Adrenal gland (tissue), 19 donors: ENCODE measurements at regions of chr2 and their contacts with region 1.

Region 1: DNA sequence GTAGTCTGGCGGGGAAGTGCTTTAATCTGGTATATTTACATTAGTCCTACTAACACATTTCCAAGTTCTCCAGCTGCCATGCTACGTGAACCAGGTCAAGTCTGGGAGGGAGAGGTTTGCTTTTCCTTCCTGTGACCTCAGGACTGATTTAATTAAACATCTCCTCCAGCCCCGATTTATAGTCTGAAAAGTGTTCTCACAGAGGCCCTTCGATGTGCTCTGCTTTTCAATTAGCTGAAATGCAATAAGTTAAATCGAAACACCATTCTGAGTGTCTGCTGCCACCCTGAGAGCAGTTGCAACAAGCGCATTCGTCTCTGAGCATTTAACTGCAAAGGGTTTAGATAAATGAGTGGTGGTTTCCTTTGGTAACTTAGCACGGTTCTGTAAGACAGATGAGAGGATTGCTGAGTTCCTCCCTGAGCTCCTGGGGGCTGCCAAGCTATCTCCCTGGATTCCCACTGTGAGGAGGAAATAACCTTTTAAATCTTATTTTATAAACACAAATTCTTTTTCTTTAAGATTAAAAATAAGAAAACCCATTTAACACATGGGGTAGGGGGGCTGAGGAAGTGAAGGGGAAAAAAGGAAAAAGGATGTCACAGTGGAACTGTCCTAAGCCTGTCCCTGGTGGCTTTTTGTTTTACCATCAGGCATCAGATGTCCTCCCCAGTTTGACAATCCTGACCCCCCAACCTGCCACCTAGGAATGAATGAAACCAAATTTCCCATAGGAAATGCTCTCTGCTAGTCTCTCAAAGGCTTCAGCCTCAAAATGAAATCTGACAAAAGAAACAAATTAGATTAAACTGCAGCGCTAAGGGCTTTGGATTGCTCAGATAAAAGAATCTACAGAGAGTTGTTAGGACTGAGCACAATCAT is 56.5 kb upstream of the CREB1 start:
- DNase-seq: peak in 6 of 7 donors; percentile 16 to 83 (median 54)
- H3K4me3 ChIP-seq: no peak overlapping the region
- H3K27ac ChIP-seq: no peak overlapping the region
- H3K4me1 ChIP-seq: peaks cover 0 to 7% of the 10 kb centered on the region in 2 donors
- H3K27me3 ChIP-seq: no peaks in the 10 kb centered on the region
- CTCF ChIP-seq: peak; percentile 17 to 73 (median 59)
- POLR2A ChIP-seq: no peak

Region 2: DNA sequence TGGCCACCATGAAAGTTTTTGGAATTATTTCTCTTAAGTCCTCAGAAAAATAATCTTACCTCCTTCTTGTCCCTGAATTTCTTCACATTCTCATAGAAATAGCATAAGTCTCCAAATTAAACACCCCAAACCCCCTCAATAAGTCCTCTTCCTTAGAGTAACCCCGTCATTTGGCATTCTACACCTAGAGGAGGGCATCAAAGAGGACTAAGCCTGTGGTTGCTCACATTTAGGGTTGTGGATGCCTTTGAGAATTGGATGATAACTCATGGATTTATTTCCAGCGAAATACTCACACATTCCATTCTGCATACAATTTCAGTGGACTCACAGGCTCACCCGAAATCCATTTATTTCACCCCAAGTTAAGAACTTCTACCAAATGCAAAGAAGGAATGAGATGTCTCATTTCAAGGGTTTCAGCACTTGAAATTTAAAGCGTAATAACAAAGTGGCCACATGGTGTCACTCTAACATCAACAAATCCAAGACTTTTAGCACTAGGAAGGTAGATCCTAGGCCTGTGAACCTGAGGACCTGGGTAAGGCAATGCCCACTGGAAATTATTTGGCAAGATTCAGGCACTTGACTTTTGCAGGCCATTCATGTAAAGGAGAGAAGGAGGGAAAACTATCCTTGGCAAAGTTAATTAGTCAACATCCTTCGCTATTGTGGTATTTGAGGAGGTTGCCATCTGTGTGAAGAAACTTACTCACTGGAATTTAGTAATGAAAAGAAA is 779.7 kb before region 1 on chr2:
- intact Hi-C with region 1: loop called in 1 of 2 experiments (anchors 5 kb)
- DNase-seq: peak in 5 of 7 donors; percentile 20 to 41 (median 31)
- H3K4me3 ChIP-seq: no peak overlapping the region
- H3K27ac ChIP-seq: no peak overlapping the region
- H3K4me1 ChIP-seq: no peaks in the 10 kb centered on the region
- H3K27me3 ChIP-seq: no peaks in the 10 kb centered on the region
- CTCF ChIP-seq: peak; percentile 51 to 74 (median 66)
- POLR2A ChIP-seq: no peak

Region 3: DNA sequence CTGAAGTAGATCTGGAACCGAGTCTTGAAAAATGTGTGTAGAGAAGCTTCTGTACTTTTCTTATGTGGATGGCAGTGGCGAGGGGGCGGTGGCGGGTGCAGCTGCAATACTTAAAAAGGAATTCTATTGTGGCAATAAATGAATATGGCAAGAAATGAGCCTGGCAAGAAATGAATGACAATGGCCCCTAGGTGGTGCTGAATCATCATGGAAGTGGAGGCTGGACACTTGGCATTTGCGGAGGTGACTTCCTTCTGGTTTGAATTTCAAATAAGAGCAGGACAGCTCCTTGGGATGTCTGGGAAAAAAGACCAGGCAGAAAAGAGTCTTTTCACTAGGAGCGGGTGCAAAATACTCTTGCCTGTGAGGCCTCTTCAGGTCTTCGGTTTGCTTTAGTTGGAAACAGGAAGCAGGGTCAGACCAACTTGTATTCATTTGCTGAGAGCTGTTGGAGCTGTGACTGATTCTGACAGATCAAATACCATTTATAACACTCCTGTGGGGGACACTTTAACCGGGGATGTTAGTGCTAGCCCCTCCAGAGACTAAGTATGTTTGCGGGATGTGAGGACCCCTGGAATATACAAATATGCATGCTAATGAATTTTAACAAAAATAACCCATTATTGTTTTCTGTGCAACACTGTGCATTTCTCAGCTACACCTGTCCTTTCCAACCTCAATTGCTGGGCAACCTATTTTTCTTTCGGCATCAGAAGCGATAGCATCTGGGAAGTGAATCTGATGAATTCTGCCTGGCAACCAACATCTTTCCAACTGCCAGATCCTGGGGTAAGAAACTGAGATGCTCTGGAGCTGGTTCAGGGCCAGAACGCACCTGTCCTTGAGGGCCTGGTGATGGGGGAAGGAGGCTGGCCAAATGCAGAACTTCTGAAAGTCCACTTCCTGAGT is 672.5 kb before region 1 on chr2:
- intact Hi-C with region 1: loop called (anchors 5 kb)
- DNase-seq: peak; percentile 60 to 82 (median 68)
- H3K4me3 ChIP-seq: no peak overlapping the region
- H3K27ac ChIP-seq: no peak overlapping the region
- H3K4me1 ChIP-seq: no peaks in the 10 kb centered on the region
- H3K27me3 ChIP-seq: no peaks in the 10 kb centered on the region
- CTCF ChIP-seq: peak; percentile 29 to 81 (median 78)
- POLR2A ChIP-seq: no peak

Region 4: GRCh38 chr2:206993996-206994463 is 479.3 kb before region 1 on chr2:
- intact Hi-C with region 1: loop called in 1 of 2 experiments (anchors 5 kb)
- DNase-seq: no peak
- H3K4me3 ChIP-seq: no peak overlapping the region
- H3K27ac ChIP-seq: no peak overlapping the region
- H3K4me1 ChIP-seq: no peaks in the 10 kb centered on the region
- H3K27me3 ChIP-seq: no peaks in the 10 kb centered on the region
- CTCF ChIP-seq: no peak
- POLR2A ChIP-seq: no peak

Region 5: GRCh38 chr2:207166039-207166348 is 307.3 kb before region 1 on chr2:
- intact Hi-C with region 1: loop called (anchors 10 kb)
- DNase-seq: peak; percentile 99 to 100 (median 100)
- H3K4me3 ChIP-seq: peak overlapping the region in 3 of 4 donors; percentile 62 to 84 (median 82)
- H3K27ac ChIP-seq: peak overlapping the region; percentile 96 to 100 (median 100)
- H3K4me1 ChIP-seq: peaks cover 29 to 32% of the 10 kb centered on the region in 2 donors
- H3K27me3 ChIP-seq: no peaks in the 10 kb centered on the region
- CTCF ChIP-seq: no peak
- POLR2A ChIP-seq: no peak